GM12878 (cell line): ENCODE measurements at regions of chr5 and their contacts with region 1.

Region 1: DNA sequence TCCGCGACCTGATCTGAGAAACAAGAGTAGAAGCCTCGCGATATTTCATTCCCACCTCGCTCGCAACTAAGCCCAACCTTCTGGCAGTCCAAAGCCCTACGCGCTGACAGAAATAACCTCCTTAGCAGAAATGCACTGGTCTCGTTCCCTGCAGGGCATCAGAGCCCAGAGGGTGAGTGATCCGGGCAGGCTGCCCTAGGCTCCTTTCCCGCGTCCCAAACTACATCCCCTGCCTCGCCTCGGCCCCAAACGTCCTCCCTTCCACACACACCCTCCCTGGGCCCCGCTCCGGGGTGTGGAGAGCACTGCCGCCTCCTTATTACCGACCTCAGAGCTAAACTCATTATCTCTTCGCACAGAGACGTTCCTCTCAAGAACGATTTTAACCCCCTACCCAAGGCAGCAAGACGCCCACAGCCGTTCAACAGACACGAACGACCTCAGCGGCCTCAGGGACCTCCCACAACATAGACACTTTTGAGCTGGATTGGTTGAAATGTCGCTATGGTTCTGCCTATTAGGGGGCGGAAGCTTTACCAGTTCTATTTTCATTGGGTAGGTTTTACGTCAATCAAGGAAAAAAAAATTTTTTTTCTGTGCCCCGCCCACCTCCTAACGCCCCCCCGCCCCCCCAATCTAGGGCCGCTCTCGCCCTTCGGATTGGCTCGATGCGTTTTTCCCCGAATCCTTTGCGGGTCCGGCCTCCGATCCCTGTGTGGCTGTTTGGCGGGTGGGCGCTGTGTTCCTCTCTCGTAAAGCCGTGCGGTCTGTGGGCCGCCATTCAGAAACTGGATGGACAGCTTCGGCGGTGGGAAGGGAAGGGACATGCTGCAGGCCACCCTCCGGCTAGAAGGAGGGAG is at the start of gene CETN3:
- DNase-seq: peak; percentile 88
- ATAC-seq: peak; percentile 94
- H3K4me3 ChIP-seq: peak within 1 kb of the TSS; percentile 89
- H3K27ac ChIP-seq: peak within 1 kb of the TSS; percentile 97
- H3K4me1 ChIP-seq: no peaks in the 10 kb centered on the region
- H3K27me3 ChIP-seq: no peaks in the 10 kb centered on the region
- CTCF ChIP-seq: no peak
- EP300 ChIP-seq: peak in 1 of 2 experiments; percentile 44; a peak in 1 of 4 replicates
- POLR2A ChIP-seq: peak; percentile 93
- RAD21 ChIP-seq: no peak
- polyA plus RNA-seq, gene CETN3: 54.6 to 59.1 TPM

Region 2: GRCh38 chr5:90338712-90339372 is 70.7 kb before region 1 on chr5:
- CTCF ChIA-PET with region 1: interaction called, 3 read pairs
- POLR2A ChIA-PET with region 1: interaction called, 3 read pairs
- RAD21 ChIA-PET with region 1: no interaction called
- SMC1A ChIA-PET with region 1: no interaction called
- in situ Hi-C with region 1: no loop called
- intact Hi-C with region 1: loop called (anchors 5 kb)
- DNase-seq: peak; percentile 76
- ATAC-seq: peak; percentile 96
- H3K4me3 ChIP-seq: 0 out of 2 replicates have a peak overlapping the region, but pooled peaks have one; percentile 21
- H3K27ac ChIP-seq: no peak overlapping the region
- H3K4me1 ChIP-seq: 0 out of 2 replicates have a peak, but pooled peaks cover 4% of the 10 kb centered on the region
- H3K27me3 ChIP-seq: no peaks in the 10 kb centered on the region
- CTCF ChIP-seq: no peak
- EP300 ChIP-seq: peak in 1 of 2 experiments; percentile 15; a peak in 1 of 4 replicates
- POLR2A ChIP-seq: no peak
- RAD21 ChIP-seq: no peak

Region 3: GRCh38 chr5:90398726-90399125 is 10.8 kb before region 1 on chr5:
- CTCF ChIA-PET with region 1: no interaction called
- POLR2A ChIA-PET with region 1: interaction called, 3 read pairs
- RAD21 ChIA-PET with region 1: interaction called, 7 read pairs
- SMC1A ChIA-PET with region 1: interaction called, 16 read pairs
- in situ Hi-C with region 1: no loop called
- intact Hi-C with region 1: no loop called
- DNase-seq: no peak
- ATAC-seq: peak; percentile 44; the same call in 2 of the 3 replicates
- H3K4me3 ChIP-seq: no peak overlapping the region
- H3K27ac ChIP-seq: no peak overlapping the region
- H3K4me1 ChIP-seq: no peaks in the 10 kb centered on the region
- H3K27me3 ChIP-seq: no peaks in the 10 kb centered on the region
- CTCF ChIP-seq: no peak
- EP300 ChIP-seq: no peak
- POLR2A ChIP-seq: no peak
- RAD21 ChIP-seq: no peak